Stomach (tissue), 19 donors: ENCODE measurements at regions of chr11 and their contacts with region 1.

Region 1: DNA sequence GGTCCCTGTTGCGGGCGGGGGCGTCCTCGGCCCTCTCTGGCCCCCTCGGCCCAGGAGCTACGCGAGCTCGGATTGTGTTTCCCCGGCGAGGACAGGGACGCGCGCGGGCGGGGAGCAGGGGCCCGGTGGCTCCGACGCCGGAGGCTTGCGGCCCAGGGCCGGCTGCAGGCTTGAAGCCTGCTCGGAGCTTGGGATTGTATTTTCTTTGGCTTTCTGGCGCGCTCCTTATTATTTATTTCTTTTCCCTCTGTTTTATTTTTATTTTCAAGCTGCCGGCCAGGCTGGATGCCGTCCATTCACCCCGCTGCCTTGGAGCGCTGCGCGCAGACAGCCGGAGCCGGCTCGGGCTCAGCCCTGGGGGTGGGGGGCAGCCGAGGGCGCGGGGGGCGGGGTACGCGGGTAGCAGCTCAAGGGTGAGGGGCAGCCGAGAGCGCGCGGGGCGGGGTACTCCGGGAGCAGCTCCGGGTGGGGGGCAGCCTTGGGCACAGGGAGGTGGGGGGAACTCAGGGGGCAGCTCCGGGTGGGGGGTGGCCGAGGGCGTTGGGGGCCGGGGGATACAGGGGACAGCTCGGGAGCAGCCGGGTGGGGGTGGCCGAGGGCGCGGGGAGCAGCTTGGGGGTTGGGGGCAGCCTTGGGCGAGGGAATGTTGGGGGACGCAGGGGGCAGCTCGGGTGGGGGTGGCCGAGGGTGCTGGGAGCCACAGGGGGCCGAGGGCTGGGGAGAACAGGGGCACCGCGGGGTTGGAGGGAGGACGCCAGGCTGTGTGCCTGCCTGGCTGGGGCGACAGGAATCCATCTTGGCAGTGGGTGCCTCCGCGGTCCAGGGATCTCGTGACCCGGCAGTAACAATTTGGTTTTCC is 42.7 kb downstream of the KCNJ1 start:
- DNase-seq: peak in 1 of 2 donors; percentile 70
- H3K4me3 ChIP-seq: peak overlapping the region; percentile 2 to 38 (median 8)
- H3K27ac ChIP-seq: peak overlapping the region in 2 of 5 donors; percentile 26 to 38
- H3K4me1 ChIP-seq: peaks cover 0 to 8% (median 6%) of the 10 kb centered on the region in 4 donors
- H3K27me3 ChIP-seq: peaks cover 0 to 35% (median 11%) of the 10 kb centered on the region in 3 donors
- CTCF ChIP-seq: no peak
- EP300 ChIP-seq: no peak
- POLR2A ChIP-seq: no peak

Region 2: GRCh38 chr11:128157423-128158298 is 666.8 kb before region 1 on chr11:
- intact Hi-C with region 1: loop called (anchors 10 kb)
- DNase-seq: peak in 1 of 2 donors; percentile 83
- H3K4me3 ChIP-seq: peak overlapping the region in 1 of 4 donors; percentile 10
- H3K27ac ChIP-seq: no peak overlapping the region
- H3K4me1 ChIP-seq: no peaks in the 10 kb centered on the region
- H3K27me3 ChIP-seq: no peaks in the 10 kb centered on the region
- CTCF ChIP-seq: peak in 5 of 7 experiments; percentile 63 to 90 (median 80)
- EP300 ChIP-seq: no peak
- POLR2A ChIP-seq: no peak

Region 3: GRCh38 chr11:128279866-128280265 is 544.6 kb before region 1 on chr11:
- intact Hi-C with region 1: loop called (anchors 10 kb)
- DNase-seq: no peak
- H3K4me3 ChIP-seq: no peak overlapping the region
- H3K27ac ChIP-seq: no peak overlapping the region
- H3K4me1 ChIP-seq: no peaks in the 10 kb centered on the region
- H3K27me3 ChIP-seq: no peaks in the 10 kb centered on the region
- CTCF ChIP-seq: no peak
- EP300 ChIP-seq: no peak
- POLR2A ChIP-seq: no peak

Region 4: DNA sequence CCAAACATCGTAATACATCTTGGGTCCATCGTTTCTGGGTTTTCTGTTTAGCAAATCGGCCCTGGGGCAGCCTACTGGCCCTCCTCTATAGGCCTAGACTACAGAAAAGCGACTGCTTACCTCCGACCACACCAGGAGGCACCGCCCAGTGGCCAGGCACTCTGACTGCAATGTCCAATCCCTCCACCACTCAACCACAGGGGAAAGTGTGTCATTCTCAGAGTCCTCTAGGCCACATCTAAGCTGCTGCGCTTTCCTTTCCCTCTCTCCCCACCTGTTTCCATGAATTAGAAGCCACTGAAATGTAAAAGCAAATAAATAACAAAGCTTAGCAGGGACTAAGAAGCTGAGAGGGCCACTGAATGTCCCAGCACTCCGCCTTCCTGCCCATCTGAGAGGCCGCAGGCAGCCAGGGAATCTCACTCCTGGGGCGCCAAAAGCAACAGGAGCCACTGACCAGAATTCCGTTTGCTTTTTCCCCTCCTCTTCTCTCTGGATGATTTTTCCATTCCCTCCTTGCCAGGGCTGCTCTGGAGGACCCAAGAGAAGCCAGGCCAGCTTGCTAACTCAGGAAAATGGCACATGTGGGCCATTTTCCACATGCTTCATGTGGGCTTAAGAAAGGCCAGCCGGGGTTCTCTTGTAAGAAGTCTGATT is 180.6 kb before region 1 on chr11:
- intact Hi-C with region 1: loop called (anchors 10 kb)
- DNase-seq: no peak
- H3K4me3 ChIP-seq: no peak overlapping the region
- H3K27ac ChIP-seq: no peak overlapping the region
- H3K4me1 ChIP-seq: no peaks in the 10 kb centered on the region
- H3K27me3 ChIP-seq: no peaks in the 10 kb centered on the region
- CTCF ChIP-seq: no peak
- EP300 ChIP-seq: no peak
- POLR2A ChIP-seq: no peak

Region 5: GRCh38 chr11:128765571-128766549 is 58.6 kb before region 1 on chr11:
- intact Hi-C with region 1: no loop called
- DNase-seq: no peak
- H3K4me3 ChIP-seq: no peak overlapping the region
- H3K27ac ChIP-seq: no peak overlapping the region
- H3K4me1 ChIP-seq: peaks cover 0 to 7% (median 2%) of the 10 kb centered on the region in 4 donors
- H3K27me3 ChIP-seq: no peaks in the 10 kb centered on the region
- CTCF ChIP-seq: no peak
- EP300 ChIP-seq: no peak
- POLR2A ChIP-seq: no peak

Region 6: GRCh38 chr11:128776424-128777284 is 47.8 kb before region 1 on chr11:
- intact Hi-C with region 1: no loop called
- DNase-seq: peak; percentile 49 to 69
- H3K4me3 ChIP-seq: no peak overlapping the region
- H3K27ac ChIP-seq: no peak overlapping the region
- H3K4me1 ChIP-seq: peaks cover 8 to 34% (median 22%) of the 10 kb centered on the region in 4 donors
- H3K27me3 ChIP-seq: no peaks in the 10 kb centered on the region
- CTCF ChIP-seq: peak in 4 of 7 experiments; percentile 6 to 40 (median 32)
- EP300 ChIP-seq: no peak
- POLR2A ChIP-seq: no peak